ENCODE measurements at regions of chr1 and their contacts with region 1.

Region 1: DNA sequence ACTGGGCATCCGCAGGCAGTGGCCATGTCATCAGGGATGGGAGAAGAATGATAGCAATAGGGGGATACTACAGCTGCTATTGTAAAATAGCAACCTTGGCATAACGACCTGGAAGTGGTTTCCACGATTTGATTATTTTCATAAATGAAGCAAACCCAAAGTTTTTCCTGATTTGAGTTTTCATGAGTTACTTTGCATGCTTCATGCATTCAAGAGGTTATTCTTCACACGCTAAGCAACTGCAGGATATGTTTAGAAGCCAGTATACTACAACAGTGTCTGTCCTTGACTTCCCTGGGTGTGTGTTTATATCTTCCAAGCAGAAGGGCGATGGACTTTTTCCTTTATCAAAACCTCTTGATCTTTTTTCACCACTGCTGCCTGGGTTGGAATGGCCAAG is 281.1 kb upstream of the DUSP10 start:
- DNase-seq: peak; percentile 9
- ATAC-seq: peak; percentile 36; the same call in 1 of the 3 replicates
- H3K4me3 ChIP-seq: no peak overlapping the region
- H3K27ac ChIP-seq: no peak overlapping the region
- H3K4me1 ChIP-seq: no peaks in the 10 kb centered on the region
- H3K27me3 ChIP-seq: no peaks in the 10 kb centered on the region
- CTCF ChIP-seq: no peak
- EP300 ChIP-seq: no peak
- POLR2A ChIP-seq: no peak
- RAD21 ChIP-seq: no peak

Region 2: DNA sequence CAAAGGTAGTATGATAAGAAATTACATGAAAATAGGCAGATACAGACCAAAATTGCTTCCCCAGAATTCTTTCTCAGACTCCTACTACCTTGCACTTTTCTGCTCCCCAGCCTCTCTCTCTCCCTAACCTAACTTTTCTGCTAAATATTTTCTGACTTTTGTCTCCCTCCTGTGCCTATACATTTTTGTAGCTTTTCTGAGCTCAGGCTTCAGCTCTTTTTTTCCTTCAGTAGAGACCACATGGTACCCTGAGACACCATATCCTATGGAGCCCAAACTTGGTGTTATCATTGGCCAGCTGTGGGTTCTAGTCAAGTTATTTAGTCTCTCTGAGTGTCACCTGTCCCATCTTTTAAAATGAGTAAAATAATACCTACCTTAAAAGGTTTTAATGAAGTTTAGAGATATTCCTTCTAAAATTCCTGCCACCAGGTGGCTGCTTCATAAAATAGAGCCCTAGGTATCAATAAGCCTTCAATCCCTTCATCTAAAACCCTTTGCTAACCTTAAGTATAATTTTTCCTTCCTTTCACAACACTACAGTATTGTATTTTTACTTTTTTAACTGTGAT is 43.5 kb before region 1 on chr1:
- CTCF ChIA-PET with region 1: no interaction called
- POLR2A ChIA-PET with region 1: no interaction called
- RAD21 ChIA-PET with region 1: no interaction called
- SMC1A ChIA-PET with region 1: no interaction called
- in situ Hi-C with region 1: no loop called
- intact Hi-C with region 1: no loop called
- DNase-seq: no peak
- ATAC-seq: peak; percentile 48
- H3K4me3 ChIP-seq: no peak overlapping the region
- H3K27ac ChIP-seq: no peak overlapping the region
- H3K4me1 ChIP-seq: no peaks in the 10 kb centered on the region
- H3K27me3 ChIP-seq: no peaks in the 10 kb centered on the region
- CTCF ChIP-seq: no peak; a peak in 1 of 6 replicates
- EP300 ChIP-seq: no peak
- POLR2A ChIP-seq: no peak
- RAD21 ChIP-seq: peak; percentile 49

Region 3: DNA sequence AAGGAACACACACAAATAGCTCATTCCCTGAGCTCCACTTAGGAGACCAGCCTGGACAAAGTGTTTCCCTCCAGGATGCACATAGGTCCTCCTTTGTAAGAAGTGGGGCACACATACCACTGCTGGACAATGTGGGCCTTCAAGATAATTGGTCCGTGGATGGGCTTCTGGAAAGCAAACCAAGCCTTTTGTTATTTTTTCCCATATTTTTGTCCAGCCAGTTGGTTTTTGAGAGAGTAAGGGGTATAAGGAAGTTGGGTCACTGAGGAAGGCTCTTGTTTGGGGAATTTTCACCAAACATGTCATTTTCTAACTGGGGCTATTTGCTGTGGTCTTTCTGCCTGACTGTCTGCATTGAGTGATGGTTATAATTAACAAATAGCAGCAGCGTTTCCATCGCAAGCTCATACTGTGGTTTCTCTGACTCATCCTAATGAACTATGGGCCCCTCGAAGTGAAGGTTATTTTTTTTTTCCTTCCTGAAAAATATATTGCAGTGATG is 25.1 kb after region 1 on chr1:
- CTCF ChIA-PET with region 1: interaction called, 4 read pairs
- POLR2A ChIA-PET with region 1: interaction called, 9 read pairs
- RAD21 ChIA-PET with region 1: no interaction called
- SMC1A ChIA-PET with region 1: interaction called, 3 read pairs
- in situ Hi-C with region 1: no loop called
- intact Hi-C with region 1: loop called (anchors 1 kb)
- DNase-seq: peak; percentile 54
- ATAC-seq: peak; percentile 94
- H3K4me3 ChIP-seq: no peak overlapping the region
- H3K27ac ChIP-seq: peak overlapping the region; percentile 58
- H3K4me1 ChIP-seq: peaks cover 5% of the 10 kb centered on the region
- H3K27me3 ChIP-seq: no peaks in the 10 kb centered on the region
- CTCF ChIP-seq: no peak
- EP300 ChIP-seq: peak; percentile 63 to 88; a peak in 3 of 4 replicates
- POLR2A ChIP-seq: no peak
- RAD21 ChIP-seq: no peak